Psoas muscle (tissue), 8 donors: ENCODE measurements at regions of chr1 and their contacts with region 1.

Region 1: GRCh38 chr1:109910123-109910962 is at the start of gene CSF1:
- DNase-seq: peak; percentile 84 to 89
- ATAC-seq: peak; percentile 74 to 89 (median 82)
- H3K4me3 ChIP-seq: peak within 1 kb of the TSS; percentile 89
- H3K27ac ChIP-seq: peak within 1 kb of the TSS; percentile 71
- H3K4me1 ChIP-seq: peaks cover 12% of the 10 kb centered on the region
- H3K27me3 ChIP-seq: no peaks in the 10 kb centered on the region
- CTCF ChIP-seq: no peak
- total RNA-seq, gene CSF1: 7.9 to 14.7 (median 10.6) TPM

Region 2: GRCh38 chr1:109790735-109791494 is 119.4 kb before region 1 on chr1:
- intact Hi-C with region 1: loop called (anchors 5 kb)
- DNase-seq: peak; percentile 48 to 68
- ATAC-seq: peak in 3 of 4 donors; percentile 17 to 51 (median 45)
- H3K4me3 ChIP-seq: no peak overlapping the region
- H3K27ac ChIP-seq: no peak overlapping the region
- H3K4me1 ChIP-seq: peaks cover 20% of the 10 kb centered on the region
- H3K27me3 ChIP-seq: no peaks in the 10 kb centered on the region
- CTCF ChIP-seq: peak; percentile 37

Region 3: GRCh38 chr1:109969146-109969829 is 58.9 kb after region 1 on chr1:
- intact Hi-C with region 1: loop called in 1 of 2 experiments (anchors 2 kb)
- DNase-seq: no peak
- ATAC-seq: no peak
- H3K4me3 ChIP-seq: no peak overlapping the region
- H3K27ac ChIP-seq: no peak overlapping the region
- H3K4me1 ChIP-seq: no peaks in the 10 kb centered on the region
- H3K27me3 ChIP-seq: no peaks in the 10 kb centered on the region
- CTCF ChIP-seq: no peak